CD4-positive, alpha-beta memory T cell (primary cell): ENCODE measurements at regions of chr2 and their contacts with region 1.

Region 1: GRCh38 chr2:96760036-96760985 is at the start of gene CNNM4:
- DNase-seq: peak; percentile 89 to 93 (median 91)
- H3K4me3 ChIP-seq: peak within 1 kb of the TSS; percentile 67 to 89
- H3K4me3 Mint-ChIP-seq: peak within 1 kb of the TSS; percentile 85 to 92 (median 89)
- H3K27ac ChIP-seq: peak within 1 kb of the TSS; percentile 76
- H3K27ac Mint-ChIP-seq: peak within 1 kb of the TSS; percentile 81 to 93 (median 93)
- H3K4me1 ChIP-seq: peaks cover 56% of the 10 kb centered on the region
- H3K4me1 Mint-ChIP-seq: peaks cover 36 to 59% (median 48%) of the 10 kb centered on the region in 4 donors
- H3K27me3 ChIP-seq: no peaks in the 10 kb centered on the region
- H3K27me3 Mint-ChIP-seq: no peaks in the 10 kb centered on the region
- total RNA-seq, gene CNNM4: 6.7 to 7.2 TPM

Region 2: DNA sequence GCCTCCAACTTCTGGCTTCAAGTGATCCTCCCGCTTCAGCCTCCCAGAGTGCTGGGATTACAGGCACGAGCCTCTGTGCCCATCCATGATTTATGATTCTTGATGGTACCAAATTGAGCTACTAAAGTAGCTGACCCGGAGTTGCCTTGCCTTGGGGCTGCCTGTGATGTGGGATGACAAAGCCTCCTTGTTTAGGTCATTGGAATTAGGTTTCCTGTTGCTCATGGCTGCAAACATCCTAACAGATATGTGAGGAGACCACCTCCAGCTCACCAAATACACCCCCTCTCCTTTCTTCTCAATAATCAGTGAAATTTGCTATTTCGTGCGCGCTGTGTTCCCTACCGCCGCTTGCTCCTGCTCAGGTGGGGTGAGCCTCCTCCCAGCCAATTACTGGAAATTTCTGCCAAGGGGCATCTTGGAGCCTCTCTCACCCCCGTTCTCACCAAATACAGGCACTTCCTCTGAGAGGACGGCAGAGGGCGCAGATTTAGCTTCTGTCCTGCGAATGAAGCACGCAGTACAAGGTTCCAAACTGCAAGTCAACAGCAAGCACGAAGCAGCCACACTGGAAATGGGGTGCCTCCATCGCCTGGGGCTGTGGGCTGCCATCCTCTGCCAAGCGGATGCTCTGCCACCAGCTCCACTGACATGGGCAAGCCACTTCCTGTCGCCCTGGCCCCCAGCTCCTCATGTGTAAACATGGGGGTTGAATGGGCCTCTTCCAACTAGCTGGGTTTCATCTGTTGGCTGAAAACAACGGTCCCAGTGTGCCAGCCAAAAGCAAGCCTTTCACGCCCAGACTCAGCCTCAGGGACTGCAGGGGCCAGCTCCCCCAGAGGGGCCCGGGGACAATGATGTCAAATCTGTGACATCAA is 353.0 kb before region 1 on chr2:
- CTCF ChIA-PET with region 1: interaction called, 3 read pairs
- POLR2A ChIA-PET with region 1: interaction called, 4 read pairs
- intact Hi-C with region 1: loop called (anchors 2 kb)
- DNase-seq: peak; percentile 86 to 89 (median 88)
- H3K4me3 ChIP-seq: peak overlapping the region; percentile 14 to 21
- H3K4me3 Mint-ChIP-seq: peak overlapping the region; percentile 64 to 91 (median 86)
- H3K27ac ChIP-seq: peak overlapping the region; percentile 39
- H3K27ac Mint-ChIP-seq: peak overlapping the region; percentile 81 to 99 (median 97)
- H3K4me1 ChIP-seq: peaks cover 34% of the 10 kb centered on the region
- H3K4me1 Mint-ChIP-seq: peaks cover 22 to 39% (median 32%) of the 10 kb centered on the region in 4 donors
- H3K27me3 ChIP-seq: no peaks in the 10 kb centered on the region
- H3K27me3 Mint-ChIP-seq: no peaks in the 10 kb centered on the region

Region 3: GRCh38 chr2:96602330-96602823 is 157.9 kb before region 1 on chr2:
- CTCF ChIA-PET with region 1: interaction called, 4 read pairs
- POLR2A ChIA-PET with region 1: no interaction called
- intact Hi-C with region 1: loop called (anchors 1 kb)
- DNase-seq: peak in 2 of 5 donors; percentile 7 to 11
- H3K4me3 ChIP-seq: no peak overlapping the region
- H3K4me3 Mint-ChIP-seq: no peak overlapping the region
- H3K27ac ChIP-seq: no peak overlapping the region
- H3K27ac Mint-ChIP-seq: peak overlapping the region in 4 of 7 donors; percentile 17 to 58 (median 34)
- H3K4me1 ChIP-seq: no peaks in the 10 kb centered on the region
- H3K4me1 Mint-ChIP-seq: peaks cover 1 to 12% (median 10%) of the 10 kb centered on the region in 4 donors
- H3K27me3 ChIP-seq: no peaks in the 10 kb centered on the region
- H3K27me3 Mint-ChIP-seq: no peaks in the 10 kb centered on the region

Region 4: DNA sequence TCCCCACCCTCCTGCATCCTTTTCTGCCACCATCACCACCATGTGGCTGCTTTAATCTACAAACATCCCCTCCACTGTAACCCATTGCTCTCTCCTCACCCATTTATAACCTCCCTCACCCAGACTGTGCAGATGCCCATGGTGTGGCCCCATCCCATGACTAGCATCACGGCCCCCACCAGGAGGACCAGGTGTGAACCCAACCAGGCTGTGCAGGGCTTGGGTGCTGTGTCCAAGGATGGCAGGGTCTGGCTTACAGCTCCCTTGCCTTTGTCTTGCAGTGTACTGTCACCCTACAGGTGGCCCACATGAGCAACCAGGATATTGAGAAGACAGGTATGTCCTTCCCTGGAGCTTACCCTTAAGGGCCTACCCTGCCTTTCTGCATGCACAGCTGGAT is 111.0 kb before region 1 on chr2:
- CTCF ChIA-PET with region 1: no interaction called
- POLR2A ChIA-PET with region 1: no interaction called
- intact Hi-C with region 1: no loop called
- DNase-seq: no peak
- H3K4me3 ChIP-seq: no peak overlapping the region
- H3K4me3 Mint-ChIP-seq: no peak overlapping the region
- H3K27ac ChIP-seq: no peak overlapping the region
- H3K27ac Mint-ChIP-seq: no peak overlapping the region
- H3K4me1 ChIP-seq: no peaks in the 10 kb centered on the region
- H3K4me1 Mint-ChIP-seq: no peaks in the 10 kb centered on the region
- H3K27me3 ChIP-seq: no peaks in the 10 kb centered on the region
- H3K27me3 Mint-ChIP-seq: no peaks in the 10 kb centered on the region

Region 5: DNA sequence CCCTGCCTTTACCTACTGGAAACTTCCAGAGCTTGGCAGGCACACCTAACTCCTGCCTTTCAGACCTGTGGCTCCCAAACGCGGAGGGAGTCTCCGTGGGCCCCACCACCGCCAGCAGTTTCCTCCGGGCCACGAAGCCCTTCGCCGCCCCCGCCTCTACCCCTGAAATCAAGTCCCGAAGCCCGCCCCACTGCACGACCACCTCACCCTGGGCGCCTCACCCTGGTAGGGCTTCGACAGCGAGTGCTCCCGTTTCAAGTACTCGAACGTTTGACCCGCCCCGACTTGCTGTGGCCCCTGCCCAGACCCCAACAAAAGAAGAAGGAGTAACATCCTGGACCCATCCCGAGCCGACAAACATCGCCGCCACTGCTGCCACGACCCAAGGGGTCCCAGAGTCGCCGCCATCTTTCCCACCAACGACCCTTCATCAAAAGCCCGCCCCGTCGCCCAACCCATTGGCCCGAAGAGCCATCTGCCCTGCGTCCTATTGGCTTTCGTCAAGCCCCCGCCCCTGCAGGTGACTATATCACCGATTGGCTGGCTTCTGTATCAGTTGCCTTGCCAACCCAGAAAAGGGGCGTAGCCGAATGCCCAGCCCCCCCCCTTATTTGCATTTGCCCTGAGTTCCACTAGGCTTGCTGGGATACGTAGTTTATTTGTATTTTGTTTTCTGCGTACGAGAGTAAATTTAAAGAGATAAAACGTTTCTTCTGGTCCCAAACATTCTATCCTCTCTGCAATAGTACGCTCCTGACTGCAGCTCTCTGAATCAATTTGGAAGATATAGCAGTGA is 20.5 kb before region 1 on chr2 and contains the start of gene LMAN2L:
- CTCF ChIA-PET with region 1: interaction called, 87 read pairs
- POLR2A ChIA-PET with region 1: interaction called, 15 read pairs
- intact Hi-C with region 1: loop called (anchors 1 kb)
- DNase-seq: peak; percentile 94 to 99 (median 98)
- H3K4me3 ChIP-seq: peak within 1 kb of the TSS; percentile 63 to 82
- H3K4me3 Mint-ChIP-seq: peak within 1 kb of the TSS; percentile 93 to 100 (median 98)
- H3K27ac ChIP-seq: peak within 1 kb of the TSS; percentile 75
- H3K27ac Mint-ChIP-seq: peak within 1 kb of the TSS; percentile 90 to 98 (median 97)
- H3K4me1 ChIP-seq: peaks cover 36% of the 10 kb centered on the region
- H3K4me1 Mint-ChIP-seq: peaks cover 24 to 53% (median 39%) of the 10 kb centered on the region in 4 donors
- H3K27me3 ChIP-seq: no peaks in the 10 kb centered on the region
- H3K27me3 Mint-ChIP-seq: no peaks in the 10 kb centered on the region
- total RNA-seq, gene LMAN2L: 10.1 to 12.6 TPM

Region 6: GRCh38 chr2:96792772-96793749 is 32.8 kb after region 1 on chr2:
- CTCF ChIA-PET with region 1: interaction called, 21 read pairs
- POLR2A ChIA-PET with region 1: no interaction called
- intact Hi-C with region 1: no loop called
- DNase-seq: no peak
- H3K4me3 ChIP-seq: no peak overlapping the region
- H3K4me3 Mint-ChIP-seq: no peak overlapping the region
- H3K27ac ChIP-seq: no peak overlapping the region
- H3K27ac Mint-ChIP-seq: peak overlapping the region in 4 of 7 donors; percentile 5 to 68 (median 42)
- H3K4me1 ChIP-seq: no peaks in the 10 kb centered on the region
- H3K4me1 Mint-ChIP-seq: peaks cover 0 to 4% (median under 1%) of the 10 kb centered on the region in 4 donors
- H3K27me3 ChIP-seq: no peaks in the 10 kb centered on the region
- H3K27me3 Mint-ChIP-seq: no peaks in the 10 kb centered on the region

Region 7: GRCh38 chr2:96806468-96807126 is 46.3 kb after region 1 on chr2:
- CTCF ChIA-PET with region 1: interaction called, 39 read pairs
- POLR2A ChIA-PET with region 1: interaction called, 10 read pairs
- intact Hi-C with region 1: loop called (anchors 2 kb)
- DNase-seq: peak; percentile 68 to 82 (median 78)
- H3K4me3 ChIP-seq: peak overlapping the region in 1 of 2 donors; percentile 38
- H3K4me3 Mint-ChIP-seq: peak overlapping the region; percentile 79 to 92 (median 86)
- H3K27ac ChIP-seq: peak overlapping the region; percentile 22
- H3K27ac Mint-ChIP-seq: peak overlapping the region; percentile 91 to 100 (median 98)
- H3K4me1 ChIP-seq: peaks cover 39% of the 10 kb centered on the region
- H3K4me1 Mint-ChIP-seq: peaks cover 16 to 47% (median 27%) of the 10 kb centered on the region in 4 donors
- H3K27me3 ChIP-seq: no peaks in the 10 kb centered on the region
- H3K27me3 Mint-ChIP-seq: no peaks in the 10 kb centered on the region

Region 8: DNA sequence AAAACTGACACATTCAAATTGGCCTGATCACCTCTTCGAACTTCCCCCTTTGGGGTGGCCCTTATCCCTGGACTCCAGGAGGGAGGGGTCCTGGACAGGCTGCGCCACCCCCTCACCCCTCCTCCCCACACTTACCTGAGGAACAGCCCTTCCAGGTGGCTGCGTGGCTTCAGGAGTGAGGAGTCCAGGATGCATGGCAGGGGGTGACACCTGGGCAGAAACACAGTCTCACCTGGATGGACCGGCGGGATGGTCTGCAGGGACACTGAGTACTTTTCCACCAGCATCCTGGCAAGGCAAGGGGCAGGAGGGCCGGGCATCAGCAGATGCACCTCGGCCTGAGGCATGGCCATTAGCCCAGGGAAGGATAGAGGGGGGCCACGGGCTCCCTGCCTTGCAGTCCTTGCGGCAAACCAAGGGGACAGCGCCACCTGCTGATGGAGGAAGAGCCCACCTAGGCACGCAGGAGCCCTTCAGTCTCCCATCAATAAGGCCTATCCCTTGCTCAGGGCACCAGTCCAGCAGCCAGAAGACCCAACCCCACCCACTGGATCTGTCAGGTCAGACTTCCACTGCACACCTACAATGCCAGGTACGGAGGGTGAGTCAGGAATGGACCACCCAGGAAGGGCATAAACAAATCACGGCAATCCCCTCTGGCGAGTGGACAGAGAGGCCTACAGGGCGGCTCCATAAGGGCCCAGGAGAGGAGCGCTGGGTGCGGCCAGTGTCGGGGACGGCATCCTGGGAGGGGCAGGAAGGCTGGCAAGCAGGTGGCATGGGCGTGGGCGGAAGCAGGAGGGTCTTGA is 200.0 kb after region 1 on chr2:
- CTCF ChIA-PET with region 1: interaction called, 3 read pairs
- POLR2A ChIA-PET with region 1: interaction called, 5 read pairs
- intact Hi-C with region 1: loop called (anchors 5 kb)
- DNase-seq: peak; percentile 75 to 77 (median 76)
- H3K4me3 ChIP-seq: no peak overlapping the region
- H3K4me3 Mint-ChIP-seq: peak overlapping the region; percentile 49 to 78 (median 74)
- H3K27ac ChIP-seq: peak overlapping the region; percentile 58
- H3K27ac Mint-ChIP-seq: peak overlapping the region; percentile 91 to 99 (median 97)
- H3K4me1 ChIP-seq: peaks cover 58% of the 10 kb centered on the region
- H3K4me1 Mint-ChIP-seq: peaks cover 39 to 61% (median 50%) of the 10 kb centered on the region in 4 donors
- H3K27me3 ChIP-seq: no peaks in the 10 kb centered on the region
- H3K27me3 Mint-ChIP-seq: no peaks in the 10 kb centered on the region